Activated CD8-positive, alpha-beta T cell treated with anti-CD3 and anti-CD28 coated beads for 36 hours (primary cell): ENCODE measurements at regions of chr15 and their contacts with region 1.

Region 1: GRCh38 chr15:40274350-40275274 is 8.3 kb downstream of the ANKRD63 start:
- DNase-seq: peak; percentile 89
- ATAC-seq: peak; percentile 81
- H3K4me3 Mint-ChIP-seq: no peak overlapping the region
- H3K27ac Mint-ChIP-seq: no peak overlapping the region
- H3K4me1 Mint-ChIP-seq: no peaks in the 10 kb centered on the region
- H3K27me3 Mint-ChIP-seq: peaks cover 14% of the 10 kb centered on the region
- CTCF ChIP-seq: peak; percentile 100

Region 2: DNA sequence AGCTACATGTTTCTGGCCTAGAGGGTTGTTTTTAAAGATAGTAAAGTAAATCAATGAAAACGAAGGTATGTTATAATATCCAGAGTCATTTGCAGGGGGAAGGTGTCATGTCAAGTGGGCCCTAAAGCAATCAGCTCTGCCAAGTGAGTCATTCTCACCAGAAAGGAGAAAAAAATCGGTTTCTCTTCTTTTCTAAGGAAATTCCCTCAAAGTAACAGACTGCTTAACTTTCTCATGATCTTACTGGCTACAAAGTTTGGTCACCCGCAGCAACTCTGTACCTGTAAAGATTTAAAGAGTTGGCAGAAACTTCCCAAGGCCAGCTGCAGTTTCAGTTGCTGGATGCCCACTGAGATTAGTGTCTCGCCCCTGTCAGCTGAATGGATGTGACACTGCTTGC is 486.5 kb before region 1 on chr15:
- CTCF ChIA-PET with region 1: interaction called, 12 read pairs
- POLR2A ChIA-PET with region 1: no interaction called
- intact Hi-C with region 1: no loop called
- DNase-seq: peak; percentile 27
- ATAC-seq: peak; percentile 78
- H3K4me3 Mint-ChIP-seq: no peak overlapping the region
- H3K27ac Mint-ChIP-seq: peak overlapping the region; percentile 49
- H3K4me1 Mint-ChIP-seq: peaks cover 46% of the 10 kb centered on the region
- H3K27me3 Mint-ChIP-seq: peaks cover 3% of the 10 kb centered on the region
- CTCF ChIP-seq: no peak

Region 3: GRCh38 chr15:40044717-40045571 is 229.7 kb before region 1 on chr15:
- CTCF ChIA-PET with region 1: interaction called, 68 read pairs
- POLR2A ChIA-PET with region 1: interaction called, 9 read pairs
- intact Hi-C with region 1: loop called (anchors 1 kb)
- DNase-seq: peak; percentile 95
- ATAC-seq: peak; percentile 85
- H3K4me3 Mint-ChIP-seq: peak overlapping the region; percentile 9
- H3K27ac Mint-ChIP-seq: peak overlapping the region; percentile 85
- H3K4me1 Mint-ChIP-seq: peaks cover 85% of the 10 kb centered on the region
- H3K27me3 Mint-ChIP-seq: no peaks in the 10 kb centered on the region
- CTCF ChIP-seq: peak; percentile 96

Region 4: GRCh38 chr15:40121911-40122638 is 152.5 kb before region 1 on chr15:
- CTCF ChIA-PET with region 1: no interaction called
- POLR2A ChIA-PET with region 1: no interaction called
- intact Hi-C with region 1: no loop called
- DNase-seq: no peak
- ATAC-seq: no peak
- H3K4me3 Mint-ChIP-seq: no peak overlapping the region
- H3K27ac Mint-ChIP-seq: no peak overlapping the region
- H3K4me1 Mint-ChIP-seq: no peaks in the 10 kb centered on the region
- H3K27me3 Mint-ChIP-seq: no peaks in the 10 kb centered on the region
- CTCF ChIP-seq: no peak

Region 5: DNA sequence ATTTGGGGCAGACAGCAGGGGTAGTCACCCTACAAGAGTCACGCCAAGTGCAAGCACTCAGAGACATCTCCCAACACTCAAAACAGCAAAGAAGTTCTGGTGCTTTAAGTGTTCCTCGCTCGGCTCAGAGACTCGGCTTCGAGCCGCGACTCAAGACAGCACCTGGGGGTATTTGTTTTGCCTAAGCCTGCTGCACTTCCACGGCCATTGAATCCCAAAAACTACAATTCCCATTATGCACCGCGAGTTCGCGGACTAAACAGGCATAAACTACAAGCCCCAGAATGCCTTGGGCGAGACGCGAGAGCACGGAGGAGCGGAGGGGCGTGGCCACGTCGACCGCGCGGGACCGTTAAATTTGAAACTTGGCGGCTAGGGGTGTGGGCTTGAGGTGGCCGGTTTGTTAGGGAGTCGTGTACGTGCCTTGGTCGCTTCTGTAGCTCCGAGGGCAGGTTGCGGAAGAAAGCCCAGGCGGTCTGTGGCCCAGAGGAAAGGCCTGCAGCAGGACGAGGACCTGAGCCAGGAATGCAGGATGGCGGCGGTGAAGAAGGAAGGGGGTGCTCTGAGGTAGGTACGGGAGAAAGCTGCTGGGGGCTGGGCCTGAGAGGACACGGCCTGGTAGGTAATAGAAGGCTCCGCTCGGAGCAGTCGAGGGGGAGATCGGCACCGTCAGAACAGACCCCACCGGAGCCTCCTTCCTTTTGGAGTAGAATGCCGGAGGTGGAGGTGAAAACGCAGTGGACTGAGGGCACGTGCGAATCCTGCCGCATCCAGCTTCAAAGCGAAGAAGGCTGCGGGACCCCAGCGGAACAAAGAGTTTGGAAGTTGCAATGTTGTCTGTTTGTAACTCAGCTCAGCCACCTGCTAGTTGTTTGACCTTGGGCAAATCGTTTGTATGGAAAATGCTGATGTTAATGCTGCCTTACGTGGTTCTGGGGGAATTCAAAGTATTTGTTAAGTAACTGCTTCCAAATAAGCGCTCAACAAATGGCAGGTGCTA is 113.6 kb before region 1 on chr15 and contains the start of gene BUB1B:
- CTCF ChIA-PET with region 1: interaction called, 19 read pairs
- POLR2A ChIA-PET with region 1: no interaction called
- intact Hi-C with region 1: no loop called
- DNase-seq: peak; percentile 97
- ATAC-seq: peak; percentile 96
- H3K4me3 Mint-ChIP-seq: no peak within 1 kb of the TSS
- H3K27ac Mint-ChIP-seq: no peak within 1 kb of the TSS
- H3K4me1 Mint-ChIP-seq: peaks cover 4% of the 10 kb centered on the region
- H3K27me3 Mint-ChIP-seq: no peaks in the 10 kb centered on the region
- CTCF ChIP-seq: no peak
- total RNA-seq, gene BUB1B: 79.6 to 82.5 TPM

Region 6: DNA sequence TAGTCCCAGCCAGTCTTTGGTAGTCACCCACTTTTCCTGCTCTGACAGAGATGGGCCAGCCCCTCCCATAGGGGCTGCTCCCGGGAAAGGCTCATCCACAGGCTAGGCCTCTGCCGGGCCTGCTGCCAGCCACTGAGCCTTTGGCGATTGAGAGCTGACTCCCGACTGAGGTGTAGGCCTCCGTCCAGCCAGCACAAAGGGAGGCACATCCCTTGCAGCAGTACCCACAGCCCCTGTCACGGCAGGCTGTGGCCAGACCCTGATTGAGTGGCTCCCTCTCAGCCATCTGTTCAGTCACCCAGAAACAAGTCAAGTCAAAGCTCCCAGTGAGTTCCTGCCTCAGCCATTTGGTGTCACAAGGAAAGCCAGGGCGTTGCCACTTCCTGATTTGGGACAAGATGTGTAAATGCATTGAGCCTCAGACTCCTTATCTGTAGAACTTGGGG is 42.0 kb before region 1 on chr15:
- CTCF ChIA-PET with region 1: interaction called, 55 read pairs
- POLR2A ChIA-PET with region 1: no interaction called
- intact Hi-C with region 1: no loop called
- DNase-seq: no peak
- ATAC-seq: no peak
- H3K4me3 Mint-ChIP-seq: no peak overlapping the region
- H3K27ac Mint-ChIP-seq: no peak overlapping the region
- H3K4me1 Mint-ChIP-seq: no peaks in the 10 kb centered on the region
- H3K27me3 Mint-ChIP-seq: peaks cover under 1% of the 10 kb centered on the region
- CTCF ChIP-seq: no peak

Region 7: DNA sequence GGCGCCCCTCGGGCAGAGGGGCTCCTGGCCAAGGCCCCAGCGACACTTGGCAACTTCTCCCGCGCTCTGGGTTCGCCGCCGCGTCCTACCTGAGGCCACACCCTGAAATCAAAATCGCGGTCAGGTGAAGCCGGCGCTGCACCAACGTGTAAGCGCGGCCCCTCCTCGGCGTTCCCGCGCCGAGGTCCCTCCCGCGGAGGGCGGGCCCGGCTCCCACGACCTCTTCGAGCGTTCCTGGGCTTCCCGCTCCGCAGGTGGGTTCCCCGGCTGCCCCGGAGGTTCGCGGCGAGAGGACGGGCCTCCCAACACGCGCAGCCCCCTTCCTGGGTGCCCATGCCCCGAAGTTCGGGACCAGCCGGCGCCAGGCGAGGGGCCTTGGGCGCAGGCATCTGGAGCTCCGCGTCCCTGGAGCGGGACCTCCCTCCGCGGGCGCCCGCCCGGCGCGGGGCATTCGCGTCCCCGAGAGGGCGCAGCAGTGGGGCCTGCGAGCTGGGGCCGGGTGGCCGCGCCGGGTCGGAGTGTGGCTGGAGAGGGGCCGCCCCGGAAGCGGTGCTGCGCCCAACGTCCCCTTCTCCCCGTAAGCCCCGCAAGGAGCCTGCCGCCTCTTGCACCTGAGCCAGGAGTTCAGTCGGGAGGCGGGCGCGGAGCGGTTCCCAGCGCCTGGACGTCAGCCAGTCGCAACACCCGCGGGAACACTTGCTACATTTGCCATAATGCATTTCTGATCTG is 22.0 kb before region 1 on chr15:
- CTCF ChIA-PET with region 1: interaction called, 88 read pairs
- POLR2A ChIA-PET with region 1: no interaction called
- intact Hi-C with region 1: no loop called
- DNase-seq: peak; percentile 16
- ATAC-seq: peak; percentile 57
- H3K4me3 Mint-ChIP-seq: peak overlapping the region; percentile 65
- H3K27ac Mint-ChIP-seq: no peak overlapping the region
- H3K4me1 Mint-ChIP-seq: peaks cover 3% of the 10 kb centered on the region
- H3K27me3 Mint-ChIP-seq: peaks cover 36% of the 10 kb centered on the region
- CTCF ChIP-seq: no peak

Region 8: GRCh38 chr15:40323239-40323952 is 48.8 kb after region 1 on chr15 and contains the start of gene INAFM2:
- CTCF ChIA-PET with region 1: interaction called, 595 read pairs
- POLR2A ChIA-PET with region 1: no interaction called
- intact Hi-C with region 1: no loop called
- DNase-seq: peak; percentile 95
- ATAC-seq: peak; percentile 94
- H3K4me3 Mint-ChIP-seq: peak within 1 kb of the TSS; percentile 71
- H3K27ac Mint-ChIP-seq: no peak within 1 kb of the TSS
- H3K4me1 Mint-ChIP-seq: peaks cover 31% of the 10 kb centered on the region
- H3K27me3 Mint-ChIP-seq: no peaks in the 10 kb centered on the region
- CTCF ChIP-seq: peak; percentile 64
- total RNA-seq, gene INAFM2: 15.0 to 16.9 TPM

Region 9: DNA sequence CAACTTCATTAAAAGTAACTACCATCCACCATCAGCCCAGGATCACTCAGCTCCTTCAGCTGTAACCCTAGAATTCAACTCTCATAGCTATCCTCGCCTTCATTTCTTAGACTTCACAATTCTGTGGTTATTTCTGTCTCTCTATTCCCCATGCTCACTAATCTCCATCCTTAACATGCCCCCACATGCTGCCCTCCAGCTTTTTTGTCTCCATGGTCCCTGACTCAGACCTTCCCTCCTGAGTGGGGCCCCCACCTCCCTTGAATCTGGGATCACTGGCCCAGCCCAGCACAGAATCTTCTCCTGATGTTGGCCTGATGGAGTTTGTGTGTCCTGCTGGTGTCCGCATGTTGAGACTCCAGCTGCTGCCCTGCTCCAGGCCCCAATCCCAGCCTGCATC is 237.8 kb after region 1 on chr15:
- CTCF ChIA-PET with region 1: no interaction called
- POLR2A ChIA-PET with region 1: no interaction called
- intact Hi-C with region 1: no loop called
- DNase-seq: no peak
- ATAC-seq: no peak
- H3K4me3 Mint-ChIP-seq: peak overlapping the region; percentile 67
- H3K27ac Mint-ChIP-seq: no peak overlapping the region
- H3K4me1 Mint-ChIP-seq: peaks cover 11% of the 10 kb centered on the region
- H3K27me3 Mint-ChIP-seq: peaks cover 48% of the 10 kb centered on the region
- CTCF ChIP-seq: no peak

Region 10: DNA sequence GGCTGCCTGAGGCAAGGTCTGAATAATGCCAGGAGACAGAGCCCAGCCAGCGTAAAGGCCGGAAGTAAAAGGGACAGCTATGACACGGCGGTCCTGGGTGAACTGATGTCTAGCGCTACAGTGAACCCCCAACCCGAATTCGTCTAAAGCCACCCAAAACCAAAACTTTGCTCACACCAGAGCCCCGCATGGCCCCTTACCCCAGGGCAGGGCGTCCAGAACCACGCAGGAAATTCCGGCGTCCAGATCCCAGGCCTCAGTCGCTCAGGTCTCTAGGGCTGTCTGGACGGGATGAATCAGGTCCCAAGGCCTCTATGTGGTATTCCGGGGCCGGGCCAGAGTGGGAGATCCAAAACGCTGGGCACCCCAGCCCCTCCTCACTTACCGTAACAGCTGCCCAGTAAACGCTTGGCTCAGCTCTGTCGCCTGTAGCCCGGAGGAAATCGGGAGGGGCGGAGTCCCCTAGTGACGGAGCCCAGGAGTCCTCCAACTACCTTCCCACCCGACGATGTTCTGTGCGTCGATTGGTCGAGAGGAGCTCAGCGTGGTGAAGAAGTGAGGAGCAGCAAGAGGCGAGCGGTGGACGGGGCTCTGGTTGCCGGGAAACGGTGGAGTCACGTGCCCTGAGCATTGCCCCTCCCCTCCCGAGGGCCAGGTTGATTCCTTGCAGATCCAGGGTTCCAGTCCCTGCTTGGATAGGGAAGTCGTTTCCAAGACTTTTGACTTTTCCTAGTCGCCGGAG is 290.1 kb after region 1 on chr15 and contains the start of gene CCDC32:
- CTCF ChIA-PET with region 1: no interaction called
- POLR2A ChIA-PET with region 1: no interaction called
- intact Hi-C with region 1: no loop called
- DNase-seq: peak; percentile 98
- ATAC-seq: peak; percentile 96
- H3K4me3 Mint-ChIP-seq: peak within 1 kb of the TSS; percentile 95
- H3K27ac Mint-ChIP-seq: peak within 1 kb of the TSS; percentile 94
- H3K4me1 Mint-ChIP-seq: peaks cover 41% of the 10 kb centered on the region
- H3K27me3 Mint-ChIP-seq: no peaks in the 10 kb centered on the region
- CTCF ChIP-seq: no peak
- total RNA-seq, gene CCDC32: 21.3 to 22.0 TPM